ENCODE measurements at regions of chr1 and their contacts with region 1.

Region 1: DNA sequence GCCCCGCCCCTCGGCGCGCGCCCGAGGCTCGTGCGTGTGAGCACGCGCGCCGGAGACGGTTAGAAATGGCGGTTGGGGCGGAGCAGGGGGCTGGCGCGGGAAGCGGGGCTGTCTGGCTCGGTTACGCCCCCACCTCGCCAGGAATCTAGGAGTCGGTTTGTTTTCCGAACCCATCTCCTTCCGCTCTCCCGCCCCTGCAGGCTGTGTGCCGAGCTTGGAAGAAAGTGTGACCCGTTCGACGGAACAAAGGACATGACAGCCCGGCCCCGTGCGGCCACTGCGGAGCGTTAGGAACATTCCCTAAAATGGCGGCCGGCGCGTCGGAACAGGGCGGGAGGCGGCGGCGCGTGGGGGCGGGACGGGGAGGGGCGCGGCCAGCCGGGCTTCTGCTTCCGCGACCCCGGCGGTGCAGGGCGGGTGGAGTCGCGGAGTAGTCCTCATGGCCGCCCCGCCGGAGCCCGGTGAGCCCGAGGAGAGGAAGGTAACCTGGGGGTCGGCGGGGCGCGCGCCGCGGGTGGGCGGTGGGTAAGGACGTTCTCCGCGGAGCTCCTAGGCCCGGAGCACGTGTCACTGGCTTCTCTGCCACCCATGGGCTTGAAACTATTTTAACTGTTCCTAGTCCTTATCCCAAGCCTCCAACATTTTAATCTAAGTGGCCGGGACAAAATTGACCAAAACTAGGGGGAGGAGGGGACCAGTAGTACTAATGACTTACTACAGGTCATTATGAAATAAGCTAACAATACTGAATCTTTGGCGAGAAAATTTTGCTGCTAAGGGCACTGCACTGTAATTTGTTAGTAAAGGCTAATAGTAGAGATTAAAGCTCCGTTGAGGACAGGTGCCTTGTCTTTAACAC is at the start of gene COX20:
- DNase-seq: peak in 1 of 2 experiments; percentile 75
- H3K4me3 ChIP-seq: peak within 1 kb of the TSS; percentile 79
- H3K27ac ChIP-seq: peak within 1 kb of the TSS; percentile 98
- H3K4me1 ChIP-seq: peaks cover 22% of the 10 kb centered on the region
- H3K27me3 ChIP-seq: no peaks in the 10 kb centered on the region
- CTCF ChIP-seq: no peak
- total RNA-seq, gene COX20: 34.5 and 40.7 TPM in 2 replicates

Region 2: GRCh38 chr1:244371242-244372141 is 464.0 kb before region 1 on chr1:
- CTCF ChIA-PET with region 1: no interaction called
- POLR2A ChIA-PET with region 1: no interaction called
- intact Hi-C with region 1: no loop called
- DNase-seq: no peak
- H3K4me3 ChIP-seq: no peak overlapping the region
- H3K27ac ChIP-seq: no peak overlapping the region
- H3K4me1 ChIP-seq: no peaks in the 10 kb centered on the region
- H3K27me3 ChIP-seq: no peaks in the 10 kb centered on the region
- CTCF ChIP-seq: no peak

Region 3: GRCh38 chr1:244652699-244653466 is 182.6 kb before region 1 on chr1 and contains the start of gene DESI2:
- CTCF ChIA-PET with region 1: no interaction called
- POLR2A ChIA-PET with region 1: no interaction called
- intact Hi-C with region 1: loop called (anchors 10 kb)
- DNase-seq: peak; percentile 96 to 97
- H3K4me3 ChIP-seq: peak within 1 kb of the TSS; percentile 76
- H3K27ac ChIP-seq: peak within 1 kb of the TSS; percentile 48
- H3K4me1 ChIP-seq: peaks cover 28% of the 10 kb centered on the region
- H3K27me3 ChIP-seq: no peaks in the 10 kb centered on the region
- CTCF ChIP-seq: peak; percentile 68; the same call in 1 of the 2 replicates
- total RNA-seq, gene DESI2: 34.1 and 45.8 TPM in 2 replicates

Region 4: GRCh38 chr1:244801246-244801645 is 34.3 kb before region 1 on chr1:
- CTCF ChIA-PET with region 1: interaction called, 5 read pairs
- POLR2A ChIA-PET with region 1: interaction called, 5 read pairs
- intact Hi-C with region 1: loop called (anchors 2 kb)
- DNase-seq: peak in 1 of 2 experiments; percentile 10
- H3K4me3 ChIP-seq: no peak overlapping the region
- H3K27ac ChIP-seq: no peak overlapping the region
- H3K4me1 ChIP-seq: no peaks in the 10 kb centered on the region
- H3K27me3 ChIP-seq: no peaks in the 10 kb centered on the region
- CTCF ChIP-seq: peak; percentile 76

Region 5: GRCh38 chr1:244970661-244971551 is 135.4 kb after region 1 on chr1:
- CTCF ChIA-PET with region 1: interaction called, 3 read pairs
- POLR2A ChIA-PET with region 1: no interaction called
- intact Hi-C with region 1: loop called (anchors 1 kb)
- DNase-seq: peak; percentile 80 to 93
- H3K4me3 ChIP-seq: peak overlapping the region; percentile 65
- H3K27ac ChIP-seq: peak overlapping the region; percentile 97
- H3K4me1 ChIP-seq: peaks cover 25% of the 10 kb centered on the region
- H3K27me3 ChIP-seq: no peaks in the 10 kb centered on the region
- CTCF ChIP-seq: peak; percentile 65; the same call in 1 of the 2 replicates

Measured in PC-9 (cell line).